Right ventricle myocardium superior (tissue), 1 donor: ENCODE measurements at regions of chr3 and their contacts with region 1.

Region 1: DNA sequence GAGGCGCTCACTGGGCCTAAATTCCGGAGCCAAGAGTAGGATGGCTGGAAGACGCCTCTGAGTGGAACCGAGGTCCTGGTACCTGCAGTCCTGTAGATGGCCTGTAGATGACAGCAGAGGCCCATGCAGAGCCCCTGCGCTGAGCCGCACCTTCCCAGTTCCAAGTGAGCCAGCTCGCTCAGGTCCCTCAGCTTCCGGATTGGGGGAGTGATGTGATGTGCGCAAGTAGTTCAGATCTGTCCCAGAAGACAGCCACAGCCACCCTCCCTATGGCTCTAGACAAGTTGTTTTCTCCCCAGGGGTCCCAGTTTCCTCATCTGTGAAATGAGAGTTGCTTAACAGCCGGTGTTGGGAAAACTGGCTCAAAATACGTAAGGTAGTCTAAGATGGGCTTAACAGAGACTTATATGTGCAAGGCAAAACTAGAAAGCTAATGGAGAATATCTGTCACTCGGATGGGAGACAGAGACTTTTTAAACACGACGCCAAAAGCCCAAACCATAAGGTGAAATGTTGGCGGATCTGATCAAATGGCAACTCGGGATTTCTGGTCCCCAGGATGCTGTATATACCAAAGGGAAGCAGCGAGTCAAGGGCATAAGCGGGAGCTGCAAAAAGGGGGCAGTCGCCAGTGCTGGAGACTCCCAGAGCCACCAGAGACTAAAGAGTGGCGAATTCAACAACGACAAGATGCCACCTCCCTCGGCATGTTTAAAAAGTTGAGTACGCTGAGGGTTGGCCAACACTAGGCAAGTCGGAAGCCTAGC is 765 bp upstream of the MAPKAPK3 start:
- DNase-seq: peak; percentile 88
- ATAC-seq: peak; percentile 47

Region 2: DNA sequence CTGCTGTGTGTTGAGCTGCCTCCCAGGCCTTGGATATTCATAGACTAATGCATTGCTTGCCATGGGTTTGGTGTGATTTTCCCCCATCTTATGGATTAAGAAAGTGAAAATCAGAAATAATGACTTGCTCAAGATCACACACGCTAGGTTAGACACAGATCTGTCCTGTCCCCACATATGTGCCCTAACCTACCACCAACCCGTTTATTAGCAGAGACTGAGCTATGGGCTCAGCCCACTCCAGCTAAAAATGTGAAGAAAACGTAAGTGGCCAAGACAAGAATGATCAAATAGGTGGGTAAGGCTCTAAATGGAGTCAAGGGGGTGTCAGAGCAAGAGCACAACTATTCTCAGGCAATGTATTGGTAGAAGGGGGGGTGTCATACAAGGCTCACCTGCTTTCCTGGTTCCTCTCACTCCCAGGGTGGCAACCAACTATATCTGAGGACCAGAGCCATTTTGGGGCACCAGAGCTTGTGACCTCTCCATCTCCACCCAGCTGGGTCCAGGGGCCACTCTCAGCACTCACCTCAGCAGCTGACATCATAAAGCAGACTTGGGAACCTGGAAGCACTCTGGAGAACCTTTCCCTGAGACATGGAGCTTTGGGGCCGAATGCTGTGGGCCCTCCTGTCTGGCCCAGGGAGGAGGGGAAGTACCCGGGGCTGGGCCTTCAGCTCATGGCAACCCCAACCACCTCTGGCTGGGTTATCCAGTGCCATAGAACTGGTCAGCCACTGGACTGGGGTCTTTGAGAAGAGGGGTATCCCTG is 45.5 kb before region 1 on chr3:
- intact Hi-C with region 1: loop called (anchors 1 kb)
- DNase-seq: no peak
- ATAC-seq: no peak

Region 3: DNA sequence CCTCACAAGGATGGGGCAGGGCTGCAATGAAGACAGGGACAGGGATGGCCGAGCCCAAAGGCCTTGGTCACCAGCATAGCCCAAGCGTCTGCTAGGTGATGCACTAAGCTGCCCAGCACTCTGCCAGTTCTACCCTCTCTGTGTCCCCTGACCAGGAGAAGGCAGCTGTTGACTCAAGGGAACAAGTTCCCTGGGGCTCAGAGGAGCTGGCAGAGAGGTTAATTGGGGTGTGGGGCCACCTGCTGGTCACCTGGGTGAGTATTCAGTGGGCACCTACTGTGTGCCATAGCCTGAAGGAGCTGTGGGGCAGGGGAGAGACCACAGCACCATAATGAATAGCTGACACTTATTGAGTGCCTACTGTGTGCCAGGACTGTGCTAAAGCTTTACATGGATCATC is 36.5 kb after region 1 on chr3:
- intact Hi-C with region 1: loop called (anchors 2 kb)
- DNase-seq: peak; percentile 55
- ATAC-seq: peak; percentile 40

Region 4: GRCh38 chr3:51371943-51372557 is 755.9 kb after region 1 on chr3:
- intact Hi-C with region 1: loop called (anchors 5 kb)
- DNase-seq: no peak
- ATAC-seq: peak; percentile 52

Region 5: DNA sequence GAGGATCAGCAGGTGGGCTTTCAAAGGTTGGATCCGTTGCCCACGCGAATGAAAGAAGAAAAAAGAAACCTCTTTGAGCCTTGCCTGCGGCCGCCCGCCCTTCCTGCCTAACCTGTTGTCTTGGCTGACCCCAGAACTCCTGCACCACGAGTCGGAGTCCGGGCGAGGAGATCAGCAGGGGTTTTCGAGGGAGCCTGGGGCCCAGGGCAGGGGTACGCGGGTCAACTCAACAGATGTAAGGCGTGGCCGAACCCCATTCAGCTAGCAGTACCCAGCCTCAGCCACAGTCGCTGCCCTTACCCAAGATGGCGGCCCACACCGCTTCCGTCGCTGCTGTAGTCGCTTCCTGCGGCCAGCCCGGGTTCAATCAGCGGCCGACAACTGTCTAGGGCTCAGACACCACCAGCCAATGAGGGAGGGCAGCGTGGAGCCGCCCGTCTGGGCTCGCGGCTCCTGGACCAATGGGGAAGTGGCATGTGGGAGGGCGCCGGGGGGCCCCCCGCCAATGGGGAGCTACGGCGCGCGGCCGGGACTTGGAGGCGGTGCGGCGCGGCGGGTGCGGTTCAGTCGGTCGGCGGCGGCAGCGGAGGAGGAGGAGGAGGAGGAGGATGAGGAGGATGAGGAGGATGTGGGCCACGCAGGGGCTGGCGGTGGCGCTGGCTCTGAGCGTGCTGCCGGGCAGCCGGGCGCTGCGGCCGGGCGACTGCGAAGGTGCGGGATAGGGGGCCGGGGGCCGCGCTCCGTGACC is 768.7 kb after region 1 on chr3 and contains the start of gene MANF:
- intact Hi-C with region 1: loop called (anchors 5 kb)
- DNase-seq: peak; percentile 99
- ATAC-seq: peak; percentile 98
- total RNA-seq, gene MANF: 41.1 TPM